AG04450 (cell line): ENCODE measurements at regions of chr10 and their contacts with region 1.

Region 1: DNA sequence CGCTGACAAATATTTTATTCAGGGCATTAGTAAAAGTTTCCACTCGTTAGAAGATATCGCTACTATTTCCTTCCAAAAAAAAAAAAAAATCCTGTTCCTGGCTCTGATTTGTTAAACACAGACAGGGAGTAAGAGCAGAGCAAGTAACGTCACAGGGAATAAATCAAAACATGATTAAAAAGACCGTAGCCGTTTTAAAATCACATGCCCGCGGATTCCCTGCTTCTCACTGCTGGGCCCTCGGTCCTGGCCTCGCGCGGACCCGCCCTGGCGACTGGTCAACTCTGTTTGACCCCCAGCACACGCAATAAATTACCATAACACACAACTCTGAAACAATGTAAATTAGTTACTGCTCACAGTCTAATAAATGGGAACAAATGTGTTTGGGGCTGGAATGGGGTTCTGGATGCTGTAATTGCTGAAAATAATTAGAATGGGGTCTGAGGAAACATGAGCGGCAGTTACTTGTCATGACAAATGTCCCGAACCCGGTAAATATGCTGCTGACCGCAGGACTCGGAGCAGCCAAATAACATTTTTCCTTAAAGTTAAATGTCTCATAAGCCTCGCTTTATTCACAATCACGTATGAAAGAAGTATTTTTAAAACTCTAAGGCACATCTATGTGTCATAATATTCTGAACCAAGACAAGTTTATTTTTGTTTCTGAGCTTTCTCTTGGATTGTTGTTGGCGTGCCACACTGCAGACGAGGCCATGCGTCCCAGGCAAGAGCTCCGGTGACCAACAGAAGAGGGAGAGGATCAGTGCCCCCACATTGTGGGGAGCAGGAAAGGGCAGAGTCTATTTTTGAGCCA is 17.9 kb downstream of the EBF3 start:
- DNase-seq: no peak
- H3K4me3 ChIP-seq: no peak overlapping the region
- H3K27ac ChIP-seq: no peak overlapping the region
- H3K27me3 ChIP-seq: no peaks in the 10 kb centered on the region
- CTCF ChIP-seq: no peak

Region 2: DNA sequence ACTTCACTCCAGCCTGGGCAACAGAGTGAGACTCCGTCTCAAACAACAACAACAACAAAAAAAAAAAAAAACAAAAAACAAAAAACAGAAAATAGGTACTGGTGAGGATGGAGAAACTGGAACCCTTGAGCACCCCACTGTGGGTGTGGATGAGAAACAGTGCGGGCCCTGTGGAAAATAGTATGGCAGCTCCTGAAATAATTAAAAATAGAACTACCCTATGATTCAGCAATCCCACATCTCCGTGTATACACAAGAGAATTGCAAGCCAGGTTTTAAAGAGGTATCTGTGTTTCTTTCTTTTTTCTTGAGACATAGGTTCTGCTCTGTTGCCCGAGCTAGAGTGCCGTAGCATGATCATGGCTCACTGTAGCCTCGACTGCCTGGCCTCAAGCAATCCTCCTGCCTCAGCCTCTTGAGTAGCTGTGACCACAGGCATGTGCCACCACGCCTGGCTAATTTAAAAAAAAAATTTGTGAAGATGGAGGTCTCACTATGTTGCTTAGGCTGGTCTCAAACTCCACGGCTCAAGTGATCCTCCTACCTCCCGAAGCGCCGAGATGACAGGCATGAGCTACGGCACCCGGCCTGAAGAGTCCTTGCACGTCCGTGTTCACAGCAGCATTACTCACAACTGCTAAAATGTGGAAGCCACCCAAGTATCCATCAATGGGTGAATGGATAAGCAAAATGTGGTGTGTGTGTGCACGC is 21.6 kb before region 1 on chr10:
- CTCF ChIA-PET with region 1: interaction called, 12 read pairs
- POLR2A ChIA-PET with region 1: no interaction called
- DNase-seq: no peak
- H3K4me3 ChIP-seq: no peak overlapping the region
- H3K27ac ChIP-seq: no peak overlapping the region
- H3K27me3 ChIP-seq: no peaks in the 10 kb centered on the region
- CTCF ChIP-seq: no peak